HEK293 (cell line): ENCODE measurements at regions of chr9 and their contacts with region 1.

Region 1: GRCh38 chr9:129080602-129081387 is at the start of gene DOLPP1:
- H3K4me3 ChIP-seq: peak within 1 kb of the TSS; percentile 93
- H3K27ac ChIP-seq: peak within 1 kb of the TSS; percentile 63; the same call in 1 of the 2 replicates
- H3K4me1 ChIP-seq: 0 out of 2 replicates have a peak, but pooled peaks cover 2% of the 10 kb centered on the region
- CTCF ChIP-seq: no peak

Region 2: DNA sequence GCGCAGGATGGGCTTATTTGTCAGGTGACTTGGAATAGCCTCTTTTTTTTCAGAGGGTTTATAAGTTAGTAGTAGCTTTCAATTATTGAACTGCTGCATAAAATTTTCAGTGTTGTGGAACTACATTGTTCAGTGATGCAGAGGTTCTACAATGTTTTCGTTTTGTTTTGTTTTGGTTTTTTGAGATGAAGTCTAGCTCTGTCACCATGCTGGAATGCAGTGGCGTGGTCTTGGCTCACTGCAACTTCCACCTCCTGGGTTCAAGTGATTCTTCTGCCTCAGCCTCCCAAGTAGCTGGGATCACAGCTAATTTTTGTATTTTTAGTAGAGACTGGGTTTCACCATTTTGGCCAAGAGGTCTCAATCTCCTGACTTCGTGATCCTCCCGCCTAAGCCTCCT is 111.3 kb before region 1 on chr9:
- CTCF ChIA-PET with region 1: no interaction called
- POLR2A ChIA-PET with region 1: no interaction called
- H3K4me3 ChIP-seq: no peak overlapping the region
- H3K27ac ChIP-seq: no peak overlapping the region
- H3K4me1 ChIP-seq: no peaks in the 10 kb centered on the region
- CTCF ChIP-seq: no peak

Region 3: GRCh38 chr9:128992995-128993394 is 87.8 kb before region 1 on chr9:
- CTCF ChIA-PET with region 1: no interaction called
- POLR2A ChIA-PET with region 1: no interaction called
- H3K4me3 ChIP-seq: no peak overlapping the region
- H3K27ac ChIP-seq: no peak overlapping the region
- H3K4me1 ChIP-seq: no peaks in the 10 kb centered on the region
- CTCF ChIP-seq: peak; percentile 67

Region 4: DNA sequence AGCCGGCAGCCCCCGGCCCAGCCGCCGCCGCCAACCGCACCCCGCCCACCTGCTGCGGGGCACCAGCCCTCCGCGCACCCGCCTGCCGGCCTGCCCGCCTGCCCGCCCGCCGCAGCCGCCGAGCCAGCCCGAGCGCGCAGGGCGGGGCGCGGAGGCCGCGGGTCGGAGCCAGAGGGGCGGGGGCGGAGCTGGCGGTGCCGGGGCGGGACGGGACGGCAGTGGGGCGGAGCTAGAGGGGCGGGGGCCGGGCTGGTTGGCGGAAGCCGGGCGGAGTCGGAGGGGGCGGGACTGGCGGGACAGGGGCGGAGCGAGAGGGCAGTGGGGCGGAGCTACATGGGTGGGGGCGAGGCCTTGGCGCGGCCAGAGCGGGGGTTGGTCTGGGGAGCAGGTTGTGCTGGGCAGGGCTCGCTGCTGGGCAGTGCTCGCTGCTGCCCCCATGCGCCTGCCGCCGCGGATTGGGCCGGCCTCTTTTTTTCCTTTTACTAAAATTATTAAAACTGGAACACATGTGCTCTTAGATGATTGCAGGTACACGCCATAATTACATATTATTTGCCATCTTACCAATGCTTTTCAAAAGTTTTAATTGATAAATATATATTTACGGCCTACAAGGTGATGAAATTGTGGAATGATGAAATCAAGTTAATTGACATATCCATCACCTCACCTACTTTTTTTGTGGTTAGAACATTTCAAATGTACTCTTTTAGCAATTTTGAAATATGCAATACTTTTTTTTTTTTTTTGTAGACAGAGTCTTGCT is 52.4 kb before region 1 on chr9 and contains the start of gene SH3GLB2:
- CTCF ChIA-PET with region 1: no interaction called
- POLR2A ChIA-PET with region 1: interaction called, 15 read pairs
- H3K4me3 ChIP-seq: peak within 1 kb of the TSS; percentile 74
- H3K27ac ChIP-seq: peak within 1 kb of the TSS; percentile 67; the same call in 1 of the 2 replicates
- H3K4me1 ChIP-seq: no peaks in the 10 kb centered on the region
- CTCF ChIP-seq: peak; percentile 78

Region 5: GRCh38 chr9:129036241-129036922 is 44.4 kb before region 1 on chr9 and contains the start of gene MIGA2:
- CTCF ChIA-PET with region 1: no interaction called
- POLR2A ChIA-PET with region 1: interaction called, 14 read pairs
- H3K4me3 ChIP-seq: peak within 1 kb of the TSS; percentile 77
- H3K27ac ChIP-seq: peak within 1 kb of the TSS; percentile 62
- H3K4me1 ChIP-seq: no peaks in the 10 kb centered on the region
- CTCF ChIP-seq: no peak; the same call in 1 of the 2 replicates

Region 6: DNA sequence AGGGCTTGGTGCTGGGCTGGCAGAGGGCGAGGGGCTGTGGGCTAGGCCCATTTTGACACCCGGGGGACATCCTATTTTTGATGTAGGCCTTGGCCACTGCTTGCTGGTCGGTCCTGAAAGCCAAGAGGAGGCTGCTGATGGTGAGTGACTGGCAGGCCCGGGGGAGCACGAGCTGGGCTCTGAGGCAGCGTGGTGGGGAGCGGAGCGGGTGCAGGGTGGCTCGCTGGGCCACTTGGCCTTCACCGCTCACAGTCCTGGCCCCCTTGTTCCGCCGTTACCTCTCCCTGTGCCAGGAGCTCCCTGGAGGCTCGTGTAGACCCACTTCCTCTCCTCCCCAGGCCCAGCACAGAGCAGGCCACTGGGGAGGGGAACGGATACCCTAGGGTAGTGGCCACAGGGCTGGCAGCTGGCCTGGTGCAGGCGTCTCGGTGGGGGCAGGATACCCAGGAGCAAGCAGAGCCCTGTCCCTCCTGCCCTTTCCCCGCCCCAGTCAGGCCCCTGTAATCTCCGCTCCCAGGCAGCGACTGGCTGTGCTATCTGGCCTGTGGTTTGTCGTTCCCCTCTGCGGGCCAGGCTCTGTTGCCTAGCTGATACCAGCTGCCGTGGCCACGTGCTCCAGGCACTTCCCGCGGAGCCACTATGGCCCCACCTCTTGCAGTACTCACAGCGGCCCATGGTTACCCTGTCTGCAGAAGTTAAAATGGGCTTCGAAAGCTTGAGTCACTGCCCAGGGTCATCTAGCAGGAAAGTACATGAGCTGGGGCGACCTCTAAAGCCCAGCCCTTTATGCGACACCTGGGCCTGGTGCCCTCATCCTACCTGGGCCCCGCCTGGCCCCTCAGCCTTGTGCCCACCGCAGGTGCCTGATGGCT is 11.6 kb before region 1 on chr9:
- CTCF ChIA-PET with region 1: interaction called, 4 read pairs
- POLR2A ChIA-PET with region 1: interaction called, 16 read pairs
- H3K4me3 ChIP-seq: no peak overlapping the region
- H3K27ac ChIP-seq: no peak overlapping the region
- H3K4me1 ChIP-seq: no peaks in the 10 kb centered on the region
- CTCF ChIP-seq: no peak

Region 7: GRCh38 chr9:129094205-129094954 is 13.6 kb after region 1 on chr9:
- CTCF ChIA-PET with region 1: interaction called, 4 read pairs
- POLR2A ChIA-PET with region 1: interaction called, 22 read pairs
- H3K4me3 ChIP-seq: no peak overlapping the region
- H3K27ac ChIP-seq: no peak overlapping the region
- H3K4me1 ChIP-seq: no peaks in the 10 kb centered on the region
- CTCF ChIP-seq: no peak

Region 8: DNA sequence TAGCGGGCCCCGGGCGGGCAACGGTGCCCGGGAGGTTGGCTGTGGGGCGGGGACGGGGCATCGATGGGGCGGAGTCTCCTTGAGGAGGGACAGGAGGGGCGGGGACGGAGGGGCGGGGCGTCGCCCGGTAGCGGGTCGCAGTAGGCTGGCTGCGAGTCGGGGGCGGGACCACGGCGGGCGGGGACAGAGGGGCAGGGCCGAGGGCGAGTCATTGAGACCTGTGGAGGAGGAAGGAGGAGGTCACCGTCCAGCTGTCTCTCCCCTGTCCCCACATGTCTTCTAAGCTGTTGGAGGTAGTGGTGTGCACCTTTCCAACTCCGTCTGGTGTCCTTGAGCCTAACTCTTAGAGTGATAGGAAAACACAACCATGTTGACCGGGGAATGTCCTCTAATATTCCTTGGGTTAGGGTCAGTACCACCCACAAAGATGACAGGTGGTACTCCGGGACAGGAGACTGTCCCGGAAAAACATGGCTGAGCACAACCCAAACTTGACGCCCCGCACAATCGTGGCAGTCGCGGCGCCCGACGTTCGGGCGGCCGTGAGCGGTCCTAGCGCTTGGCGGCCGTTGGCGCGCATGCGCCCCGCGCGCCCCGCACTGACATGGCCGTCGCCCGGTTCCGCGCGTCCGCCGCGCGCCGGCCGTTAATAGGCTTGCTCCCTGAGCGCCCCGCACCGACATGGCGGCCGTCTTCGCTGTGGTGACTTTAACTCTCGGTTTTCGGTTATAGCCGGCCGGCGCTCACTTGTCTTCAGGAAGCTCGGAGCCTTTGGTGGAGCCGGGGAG is 30.1 kb after region 1 on chr9 and contains the starts of genes CRAT and PTPA:
- CTCF ChIA-PET with region 1: no interaction called
- POLR2A ChIA-PET with region 1: interaction called, 23 read pairs
- H3K4me3 ChIP-seq: peak within 1 kb of the TSS; percentile 97
- H3K27ac ChIP-seq: peak within 1 kb of the TSS; percentile 87
- H3K4me1 ChIP-seq: peaks cover 4% of the 10 kb centered on the region; the same call in 1 of the 2 replicates
- CTCF ChIP-seq: no peak